Right ventricle myocardium inferior (tissue), 1 donor: ENCODE measurements at regions of chr1 and their contacts with region 1.

Region 1: GRCh38 chr1:37859507-37860345 is at the start of gene MTF1:
- DNase-seq: peak; percentile 98
- ATAC-seq: peak; percentile 99
- total RNA-seq, gene MTF1: 8.1 TPM

Region 2: DNA sequence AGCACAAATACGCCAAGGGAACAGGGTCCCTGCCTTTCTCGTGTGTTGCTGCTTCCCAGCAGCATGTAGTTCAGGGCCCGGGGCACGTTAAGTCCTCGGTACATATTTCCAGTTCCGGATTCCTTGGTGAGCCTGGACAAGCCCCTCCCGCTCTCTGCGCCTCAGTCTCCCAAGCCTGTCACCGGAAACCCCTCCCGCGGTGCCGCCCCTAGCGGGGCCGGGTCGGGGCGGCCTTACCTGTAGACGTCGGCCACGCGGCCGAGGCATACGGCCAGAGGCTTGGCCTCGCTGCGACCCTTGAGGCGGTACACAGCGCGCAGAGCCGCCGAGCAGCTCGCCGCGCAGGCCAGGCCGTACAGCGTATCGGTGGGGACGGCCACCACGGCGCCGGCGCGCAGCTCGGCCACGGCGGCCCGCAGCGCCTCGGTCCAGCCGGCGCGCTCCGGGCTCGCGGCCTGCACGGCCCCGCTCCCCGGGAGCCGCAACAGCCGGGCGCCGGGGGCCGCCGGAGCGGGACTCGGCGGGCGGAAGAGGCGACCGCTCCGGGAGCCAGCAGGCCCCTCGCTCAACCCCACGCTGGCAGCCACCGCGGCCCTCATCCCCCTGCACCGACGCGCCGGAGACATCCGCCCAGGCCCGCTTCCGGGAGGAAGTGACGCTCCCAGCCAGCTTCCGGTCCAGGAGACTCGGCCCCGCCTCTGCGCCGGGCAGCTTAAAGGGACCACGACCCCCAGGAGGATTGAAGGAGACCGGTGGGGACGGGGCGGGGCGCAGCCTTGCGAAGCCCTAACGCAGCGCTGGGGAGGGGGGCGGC is 52.0 kb before region 1 on chr1 and contains the starts of genes C1orf122 and YRDC:
- intact Hi-C with region 1: loop called (anchors 1 kb)
- DNase-seq: peak; percentile 97
- ATAC-seq: peak; percentile 95
- total RNA-seq, gene C1orf122: 52.6 TPM
- total RNA-seq, gene YRDC: 4.8 TPM